CD8-positive, alpha-beta T cell (primary cell): ENCODE measurements at regions of chr14 and their contacts with region 1.

Region 1: DNA sequence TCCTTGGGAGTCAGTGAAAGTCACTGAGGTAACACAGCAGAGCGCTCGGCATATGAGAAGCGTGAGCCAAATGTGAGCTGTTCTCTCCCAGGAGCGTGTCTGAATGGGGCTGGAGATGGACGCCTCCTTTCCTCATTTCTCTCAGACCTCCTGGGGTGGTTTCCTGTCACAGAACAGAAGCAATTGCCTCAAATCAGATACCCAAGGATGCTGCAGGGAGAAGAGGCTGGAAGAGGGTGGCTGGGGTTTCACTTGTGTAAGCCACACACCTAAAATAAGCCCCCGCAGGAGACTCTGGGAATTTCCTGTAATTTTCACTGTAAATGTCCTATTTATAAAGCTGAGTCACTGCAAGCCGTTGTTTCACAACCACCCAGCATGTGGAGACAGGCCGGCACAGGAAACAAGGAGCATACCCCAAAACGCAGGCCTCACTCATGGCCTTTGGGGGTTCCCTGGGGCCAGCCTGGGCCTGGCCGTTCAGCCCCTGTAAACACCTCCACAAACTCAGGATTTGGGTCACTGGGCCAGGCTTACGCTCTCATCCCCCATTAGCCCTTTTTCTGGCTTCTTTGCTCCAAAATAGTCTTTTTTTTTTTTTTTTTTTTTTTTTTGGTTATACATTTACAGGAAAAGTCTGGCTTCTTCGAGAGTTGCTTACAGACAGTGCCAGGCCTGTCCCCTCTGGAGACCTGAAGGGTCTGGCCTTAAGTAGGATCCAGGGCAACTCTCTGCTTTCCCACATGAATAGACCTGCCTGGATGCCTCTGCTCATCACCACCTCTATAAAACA is 55.3 kb downstream of the VCPKMT start:
- DNase-seq: peak in 6 of 9 experiments; percentile 35 to 81 (median 58)
- ATAC-seq: no peak
- H3K4me3 ChIP-seq: peak overlapping the region; percentile 36 to 44
- H3K4me3 Mint-ChIP-seq: peak overlapping the region; percentile 81
- H3K27ac ChIP-seq: peak overlapping the region; percentile 82 to 93
- H3K27ac Mint-ChIP-seq: peak overlapping the region; percentile 99
- H3K4me1 ChIP-seq: peaks cover 63% of the 10 kb centered on the region
- H3K4me1 Mint-ChIP-seq: peaks cover 85% of the 10 kb centered on the region
- H3K27me3 ChIP-seq: no peaks in the 10 kb centered on the region
- H3K27me3 Mint-ChIP-seq: no peaks in the 10 kb centered on the region
- CTCF ChIP-seq: no peak

Region 2: GRCh38 chr14:49879683-49880204 is 181.3 kb before region 1 on chr14:
- CTCF ChIA-PET with region 1: interaction called, 13 read pairs
- POLR2A ChIA-PET with region 1: no interaction called
- intact Hi-C with region 1: no loop called
- DNase-seq: peak in 6 of 9 experiments; percentile 38 to 83 (median 62)
- ATAC-seq: peak; percentile 97
- H3K4me3 ChIP-seq: no peak overlapping the region
- H3K4me3 Mint-ChIP-seq: no peak overlapping the region
- H3K27ac ChIP-seq: no peak overlapping the region
- H3K27ac Mint-ChIP-seq: no peak overlapping the region
- H3K4me1 ChIP-seq: peaks cover 11% of the 10 kb centered on the region
- H3K4me1 Mint-ChIP-seq: peaks cover 12% of the 10 kb centered on the region
- H3K27me3 ChIP-seq: no peaks in the 10 kb centered on the region
- H3K27me3 Mint-ChIP-seq: no peaks in the 10 kb centered on the region
- CTCF ChIP-seq: peak; percentile 47

Region 3: GRCh38 chr14:49940808-49941421 is 120.2 kb before region 1 on chr14:
- CTCF ChIA-PET with region 1: interaction called, 6 read pairs
- POLR2A ChIA-PET with region 1: interaction called, 10 read pairs
- intact Hi-C with region 1: no loop called
- DNase-seq: peak in 3 of 9 experiments; percentile 31 to 59 (median 37)
- ATAC-seq: peak; percentile 49
- H3K4me3 ChIP-seq: no peak overlapping the region
- H3K4me3 Mint-ChIP-seq: peak overlapping the region; percentile 13
- H3K27ac ChIP-seq: peak overlapping the region in 1 of 2 experiments; percentile 53
- H3K27ac Mint-ChIP-seq: peak overlapping the region; percentile 20
- H3K4me1 ChIP-seq: peaks cover 43% of the 10 kb centered on the region
- H3K4me1 Mint-ChIP-seq: peaks cover 59% of the 10 kb centered on the region
- H3K27me3 ChIP-seq: no peaks in the 10 kb centered on the region
- H3K27me3 Mint-ChIP-seq: no peaks in the 10 kb centered on the region
- CTCF ChIP-seq: no peak

Region 4: DNA sequence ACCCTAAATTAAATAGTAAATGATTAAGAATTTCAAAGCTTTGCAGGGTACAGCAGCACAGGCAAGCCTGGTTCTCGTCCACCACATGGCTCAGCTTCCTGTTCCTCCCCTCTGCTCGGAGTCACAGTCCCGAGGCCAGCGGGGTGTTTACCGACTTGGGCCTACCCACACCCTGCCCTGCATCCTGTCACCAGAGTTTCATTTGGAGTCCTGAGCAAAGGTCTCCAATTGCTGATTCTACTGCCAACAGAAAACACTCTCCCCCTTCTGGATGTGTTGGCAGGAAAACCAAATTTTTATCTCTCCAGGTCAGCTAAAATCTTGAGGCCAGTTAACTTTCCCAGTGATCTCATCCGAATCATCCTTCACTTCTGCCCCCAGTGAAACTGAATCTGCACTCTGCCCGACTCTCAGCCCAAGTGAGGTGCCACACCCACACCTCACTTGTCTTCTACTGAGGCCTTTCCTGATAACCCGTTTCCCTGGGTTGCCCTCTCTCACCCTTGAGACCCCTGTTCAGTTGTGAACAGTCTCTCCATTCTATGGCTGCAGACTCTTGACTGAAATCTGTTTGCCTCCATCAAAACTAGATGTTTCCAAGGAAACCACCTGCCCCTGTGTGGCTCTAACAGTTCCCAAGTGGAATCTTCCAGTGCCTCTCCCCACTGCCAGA is 15.9 kb before region 1 on chr14:
- CTCF ChIA-PET with region 1: interaction called, 6 read pairs
- POLR2A ChIA-PET with region 1: interaction called, 30 read pairs
- intact Hi-C with region 1: loop called in 1 of 2 experiments (anchors 1 kb)
- DNase-seq: peak; percentile 27 to 86 (median 72)
- ATAC-seq: peak; percentile 77
- H3K4me3 ChIP-seq: peak overlapping the region in 1 of 2 experiments; percentile 17
- H3K4me3 Mint-ChIP-seq: peak overlapping the region; percentile 56
- H3K27ac ChIP-seq: peak overlapping the region; percentile 63 to 89
- H3K27ac Mint-ChIP-seq: peak overlapping the region; percentile 91
- H3K4me1 ChIP-seq: peaks cover 62% of the 10 kb centered on the region
- H3K4me1 Mint-ChIP-seq: peaks cover 65% of the 10 kb centered on the region
- H3K27me3 ChIP-seq: no peaks in the 10 kb centered on the region
- H3K27me3 Mint-ChIP-seq: no peaks in the 10 kb centered on the region
- CTCF ChIP-seq: no peak

Region 5: DNA sequence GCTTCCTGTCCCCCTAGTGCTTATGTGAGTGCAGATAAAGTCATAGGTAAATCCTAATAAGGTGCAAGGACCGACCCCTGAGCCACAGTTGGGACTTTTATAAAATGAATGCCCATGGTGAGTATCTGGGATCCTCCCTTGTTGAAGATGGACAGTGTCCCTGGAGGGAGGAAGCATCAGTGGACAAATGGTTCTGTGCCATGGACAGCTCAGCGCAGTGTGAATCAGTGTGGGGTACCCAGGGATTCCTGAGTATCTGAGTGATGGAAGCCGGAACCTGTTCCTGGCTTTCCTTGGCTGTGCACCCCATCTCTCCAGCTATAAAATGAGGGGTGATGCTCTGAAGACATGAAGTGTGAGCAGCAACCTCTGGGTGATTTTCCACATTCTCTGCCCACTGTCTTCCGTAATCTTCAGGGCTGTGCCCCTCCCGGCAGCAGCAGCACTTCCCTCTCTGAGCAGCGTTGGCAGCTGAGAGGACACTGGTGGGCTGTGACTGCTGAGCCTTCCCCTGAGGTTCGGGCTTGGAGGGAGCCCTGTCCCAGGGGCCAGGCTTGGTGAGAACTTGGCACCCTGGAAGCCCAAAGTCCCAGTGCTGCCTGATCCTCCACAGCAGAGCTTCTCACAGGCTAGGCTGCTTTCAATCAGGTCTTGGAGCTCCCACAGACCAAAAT is 30.3 kb after region 1 on chr14:
- CTCF ChIA-PET with region 1: interaction called, 14 read pairs
- POLR2A ChIA-PET with region 1: interaction called, 19 read pairs
- intact Hi-C with region 1: no loop called
- DNase-seq: no peak
- ATAC-seq: no peak
- H3K4me3 ChIP-seq: no peak overlapping the region
- H3K4me3 Mint-ChIP-seq: peak overlapping the region; percentile 26
- H3K27ac ChIP-seq: peak overlapping the region in 1 of 2 experiments; percentile 17
- H3K27ac Mint-ChIP-seq: peak overlapping the region; percentile 81
- H3K4me1 ChIP-seq: peaks cover 84% of the 10 kb centered on the region
- H3K4me1 Mint-ChIP-seq: peaks cover 87% of the 10 kb centered on the region
- H3K27me3 ChIP-seq: no peaks in the 10 kb centered on the region
- H3K27me3 Mint-ChIP-seq: no peaks in the 10 kb centered on the region
- CTCF ChIP-seq: no peak

Region 6: DNA sequence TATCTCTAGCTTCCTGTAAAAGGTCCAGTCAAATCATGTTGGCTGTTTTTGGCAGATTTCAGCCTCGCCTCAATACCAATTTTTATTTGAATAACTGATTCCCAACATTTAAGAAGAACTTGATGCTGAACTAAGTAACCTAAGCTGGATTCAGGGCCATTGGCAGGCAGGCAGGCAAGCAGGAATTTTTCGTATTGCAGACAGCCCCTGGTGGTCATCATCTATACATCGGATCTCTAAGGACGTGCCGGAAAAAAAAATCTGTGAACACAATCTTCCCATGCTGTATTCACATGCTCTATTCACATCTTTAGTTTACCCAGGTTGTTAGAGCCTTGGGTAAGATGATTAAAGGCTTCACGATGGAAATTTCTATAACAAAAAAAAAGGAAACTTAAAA is 48.3 kb after region 1 on chr14:
- CTCF ChIA-PET with region 1: interaction called, 32 read pairs
- POLR2A ChIA-PET with region 1: interaction called, 10 read pairs
- intact Hi-C with region 1: loop called in 1 of 2 experiments (anchors 1 kb)
- DNase-seq: no peak
- ATAC-seq: no peak
- H3K4me3 ChIP-seq: no peak overlapping the region
- H3K4me3 Mint-ChIP-seq: no peak overlapping the region
- H3K27ac ChIP-seq: no peak overlapping the region
- H3K27ac Mint-ChIP-seq: no peak overlapping the region
- H3K4me1 ChIP-seq: peaks cover 1% of the 10 kb centered on the region
- H3K4me1 Mint-ChIP-seq: peaks cover 20% of the 10 kb centered on the region
- H3K27me3 ChIP-seq: no peaks in the 10 kb centered on the region
- H3K27me3 Mint-ChIP-seq: no peaks in the 10 kb centered on the region
- CTCF ChIP-seq: no peak